Activated CD8-positive, alpha-beta T cell treated with anti-CD3 and anti-CD28 coated beads, Interleukin-2, amount 10 ng/mL, durations not matched to agents 7 days and 5 days (primary cell): ENCODE measurements at regions of chr3 and their contacts with region 1.

Region 1: GRCh38 chr3:39378088-39378487 is 5.1 kb upstream of the SLC25A38 start:
- DNase-seq: peak; percentile 74
- ATAC-seq: peak; percentile 76
- H3K4me3 Mint-ChIP-seq: no peak overlapping the region
- H3K27ac Mint-ChIP-seq: no peak overlapping the region
- H3K4me1 Mint-ChIP-seq: peaks cover 11% of the 10 kb centered on the region
- H3K27me3 Mint-ChIP-seq: peaks cover 2% of the 10 kb centered on the region

Region 2: GRCh38 chr3:39156421-39156820 is 221.7 kb before region 1 on chr3:
- CTCF ChIA-PET with region 1: no interaction called
- POLR2A ChIA-PET with region 1: no interaction called
- DNase-seq: no peak
- ATAC-seq: no peak
- H3K4me3 Mint-ChIP-seq: no peak overlapping the region
- H3K27ac Mint-ChIP-seq: peak overlapping the region; percentile 18
- H3K4me1 Mint-ChIP-seq: peaks cover 34% of the 10 kb centered on the region
- H3K27me3 Mint-ChIP-seq: peaks cover 21% of the 10 kb centered on the region

Region 3: GRCh38 chr3:39189959-39190269 is 188.2 kb before region 1 on chr3:
- CTCF ChIA-PET with region 1: interaction called, 18 read pairs
- POLR2A ChIA-PET with region 1: no interaction called
- DNase-seq: peak; percentile 67
- ATAC-seq: peak; percentile 54
- H3K4me3 Mint-ChIP-seq: no peak overlapping the region
- H3K27ac Mint-ChIP-seq: no peak overlapping the region
- H3K4me1 Mint-ChIP-seq: peaks cover 2% of the 10 kb centered on the region
- H3K27me3 Mint-ChIP-seq: no peaks in the 10 kb centered on the region

Region 4: DNA sequence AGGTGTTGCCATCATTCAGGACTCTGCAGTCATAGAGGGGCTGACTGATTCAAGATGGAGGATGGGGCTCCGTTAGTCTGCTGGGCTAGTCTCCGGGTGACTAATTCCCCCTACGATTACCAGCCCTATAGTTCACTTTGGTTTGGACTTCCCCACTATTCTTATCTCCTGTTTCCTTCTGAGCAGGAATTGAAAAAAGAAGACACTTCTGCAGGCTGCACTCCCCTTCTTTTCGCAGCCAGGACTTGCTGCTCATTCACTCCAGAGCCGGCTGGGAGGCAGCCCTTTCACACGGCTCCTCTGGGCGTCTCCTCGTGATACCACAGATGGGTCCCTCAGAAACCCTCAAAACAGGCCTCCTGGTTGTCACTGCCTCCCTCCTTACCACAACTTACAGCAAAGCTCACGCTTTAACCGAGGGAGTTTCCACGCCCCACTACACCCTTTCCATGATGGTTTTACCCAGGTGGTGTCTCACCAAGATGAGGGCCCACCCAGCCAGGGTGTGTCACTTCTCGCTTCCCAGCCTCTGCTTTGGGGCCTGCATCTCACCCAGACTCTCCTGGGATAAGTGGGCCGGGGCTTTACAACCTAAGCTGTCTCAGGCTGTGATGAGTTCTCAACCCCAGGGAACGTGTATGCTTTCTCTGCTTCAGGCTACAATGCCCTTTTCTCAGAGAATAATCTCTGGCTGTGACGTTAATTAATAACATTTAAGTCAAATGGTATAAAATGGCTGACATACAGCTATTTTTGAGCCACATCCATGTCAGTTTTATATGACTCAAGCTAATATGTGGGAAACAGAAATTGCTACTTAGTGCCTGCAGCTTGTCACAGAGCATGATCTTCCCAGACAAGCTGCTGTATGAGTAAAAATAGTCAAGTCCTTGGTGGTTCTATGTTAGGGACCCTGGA is 110.2 kb before region 1 on chr3:
- CTCF ChIA-PET with region 1: interaction called, 10 read pairs
- POLR2A ChIA-PET with region 1: no interaction called
- DNase-seq: peak; percentile 84
- ATAC-seq: peak; percentile 97
- H3K4me3 Mint-ChIP-seq: peak overlapping the region; percentile 54
- H3K27ac Mint-ChIP-seq: peak overlapping the region; percentile 89
- H3K4me1 Mint-ChIP-seq: peaks cover 36% of the 10 kb centered on the region
- H3K27me3 Mint-ChIP-seq: peaks cover 18% of the 10 kb centered on the region

Region 5: GRCh38 chr3:39334205-39334604 is 43.9 kb before region 1 on chr3:
- CTCF ChIA-PET with region 1: no interaction called
- POLR2A ChIA-PET with region 1: no interaction called
- DNase-seq: no peak
- ATAC-seq: no peak
- H3K4me3 Mint-ChIP-seq: no peak overlapping the region
- H3K27ac Mint-ChIP-seq: no peak overlapping the region
- H3K4me1 Mint-ChIP-seq: peaks cover 31% of the 10 kb centered on the region
- H3K27me3 Mint-ChIP-seq: peaks cover 4% of the 10 kb centered on the region

Region 6: GRCh38 chr3:39346785-39347585 is 31.1 kb before region 1 on chr3:
- CTCF ChIA-PET with region 1: interaction called, 26 read pairs
- POLR2A ChIA-PET with region 1: no interaction called
- DNase-seq: no peak
- ATAC-seq: no peak
- H3K4me3 Mint-ChIP-seq: no peak overlapping the region
- H3K27ac Mint-ChIP-seq: peak overlapping the region; percentile 57
- H3K4me1 Mint-ChIP-seq: peaks cover 42% of the 10 kb centered on the region
- H3K27me3 Mint-ChIP-seq: no peaks in the 10 kb centered on the region

Region 7: DNA sequence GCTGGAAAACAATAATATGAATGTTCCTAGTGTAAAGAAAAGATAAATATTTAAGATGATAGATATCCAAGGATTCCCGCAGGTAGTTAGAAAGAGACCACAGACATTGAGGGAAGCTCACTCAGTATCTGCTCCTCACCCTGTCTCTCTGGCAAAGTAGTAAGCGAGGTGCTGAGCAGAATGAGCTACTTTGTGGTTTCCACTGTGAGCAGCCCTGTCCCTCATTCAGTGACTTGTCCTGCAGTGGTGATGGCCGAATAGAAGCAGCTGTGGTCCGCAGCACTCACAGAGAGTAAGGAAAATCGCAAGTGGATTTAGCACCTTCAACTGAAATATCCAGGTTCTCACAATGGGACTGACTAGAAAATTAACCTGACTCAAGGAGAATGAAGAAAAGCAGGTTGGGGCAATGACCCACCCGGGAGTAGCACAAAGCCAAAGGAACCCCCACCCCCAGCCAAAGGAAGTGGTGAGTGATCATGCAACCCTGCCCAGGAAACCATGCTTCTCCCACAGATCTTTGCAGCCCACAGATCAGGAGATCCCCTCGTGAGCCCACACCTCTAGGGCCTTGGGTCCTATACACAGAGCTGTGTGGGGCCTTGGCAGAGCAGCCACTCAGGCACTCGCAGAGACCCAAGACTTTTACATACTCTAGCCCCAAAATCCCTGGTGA is 16.7 kb before region 1 on chr3:
- CTCF ChIA-PET with region 1: interaction called, 77 read pairs
- POLR2A ChIA-PET with region 1: interaction called, 3 read pairs
- DNase-seq: peak; percentile 72
- ATAC-seq: peak; percentile 86
- H3K4me3 Mint-ChIP-seq: peak overlapping the region; percentile 49
- H3K27ac Mint-ChIP-seq: peak overlapping the region; percentile 83
- H3K4me1 Mint-ChIP-seq: peaks cover 59% of the 10 kb centered on the region
- H3K27me3 Mint-ChIP-seq: peaks cover 19% of the 10 kb centered on the region

Region 8: DNA sequence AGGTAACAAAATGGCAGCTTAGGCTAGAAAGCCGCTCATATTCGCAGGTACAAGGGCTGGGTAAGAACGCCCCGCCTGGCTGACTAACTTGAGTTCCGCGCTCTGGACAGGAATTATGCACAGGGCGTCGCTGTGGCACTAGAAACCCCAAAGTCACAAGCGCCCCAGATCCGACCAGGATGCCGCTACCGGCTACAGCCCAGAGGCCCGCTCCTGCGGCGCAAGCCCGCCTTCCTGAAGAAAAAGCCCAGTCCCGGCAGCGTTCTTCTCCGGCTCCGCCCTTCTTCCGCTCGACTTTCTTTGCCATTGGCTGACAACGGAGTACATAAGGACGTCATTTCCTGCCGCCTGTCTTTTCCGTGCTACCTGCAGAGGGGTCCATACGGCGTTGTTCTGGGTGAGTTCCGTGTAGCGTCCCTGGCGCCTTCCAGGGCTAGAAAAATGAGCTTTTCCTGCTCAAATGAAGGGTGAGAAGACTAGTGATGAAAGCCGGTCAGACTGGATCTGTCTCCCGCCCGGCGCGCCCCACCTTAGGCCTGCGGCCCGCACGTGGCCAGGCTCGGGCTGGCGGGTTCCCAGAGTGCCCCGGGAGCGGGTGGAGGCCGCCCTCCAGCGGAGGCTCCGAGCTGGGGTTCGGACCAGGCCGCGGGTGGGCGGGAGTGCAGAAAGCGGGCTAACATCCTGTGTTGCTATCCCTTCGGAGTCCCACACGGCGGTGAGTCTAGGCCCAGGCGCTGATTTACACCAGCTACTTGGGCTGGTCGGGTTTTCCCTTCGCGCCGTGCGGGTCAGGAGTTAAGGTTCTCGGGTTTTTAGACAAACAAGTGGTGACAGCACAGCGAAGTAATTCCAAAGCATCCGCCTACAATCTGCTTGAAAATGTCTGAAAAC is 28.5 kb after region 1 on chr3 and contains the start of gene RPSA:
- CTCF ChIA-PET with region 1: interaction called, 17 read pairs
- POLR2A ChIA-PET with region 1: interaction called, 8 read pairs
- DNase-seq: peak; percentile 98
- ATAC-seq: peak; percentile 97
- H3K4me3 Mint-ChIP-seq: peak within 1 kb of the TSS; percentile 85
- H3K27ac Mint-ChIP-seq: peak within 1 kb of the TSS; percentile 96
- H3K4me1 Mint-ChIP-seq: peaks cover 53% of the 10 kb centered on the region
- H3K27me3 Mint-ChIP-seq: no peaks in the 10 kb centered on the region
- total RNA-seq, gene RPSA: 1,654 to 1,730 TPM